ENCODE measurements at regions of chr2 and their contacts with region 1.

Region 1: GRCh38 chr2:152611458-152612231 is 105.6 kb downstream of the PRPF40A start:
- DNase-seq: peak; percentile 64
- ATAC-seq: peak; percentile 87
- H3K4me3 ChIP-seq: peak overlapping the region in 2 of 5 experiments; percentile 33 to 36
- H3K4me3 Mint-ChIP-seq: peak overlapping the region; percentile 59
- H3K27ac ChIP-seq: peak overlapping the region; percentile 12 to 66
- H3K27ac Mint-ChIP-seq: peak overlapping the region; percentile 28
- H3K4me1 ChIP-seq: peaks cover 19 to 24% of the 10 kb centered on the region in 2 donors
- H3K4me1 Mint-ChIP-seq: peaks cover 30% of the 10 kb centered on the region
- H3K27me3 ChIP-seq: no peaks in the 10 kb centered on the region
- H3K27me3 Mint-ChIP-seq: no peaks in the 10 kb centered on the region
- CTCF ChIP-seq: no peak

Region 2: GRCh38 chr2:152568531-152568930 is 43.1 kb before region 1 on chr2:
- CTCF ChIA-PET with region 1: no interaction called
- POLR2A ChIA-PET with region 1: interaction called, 10 read pairs
- intact Hi-C with region 1: no loop called
- DNase-seq: no peak
- ATAC-seq: no peak
- H3K4me3 ChIP-seq: no peak overlapping the region
- H3K4me3 Mint-ChIP-seq: no peak overlapping the region
- H3K27ac ChIP-seq: no peak overlapping the region
- H3K27ac Mint-ChIP-seq: no peak overlapping the region
- H3K4me1 ChIP-seq: peaks cover 5 to 12% of the 10 kb centered on the region in 2 donors
- H3K4me1 Mint-ChIP-seq: peaks cover 28% of the 10 kb centered on the region
- H3K27me3 ChIP-seq: no peaks in the 10 kb centered on the region
- H3K27me3 Mint-ChIP-seq: no peaks in the 10 kb centered on the region
- CTCF ChIP-seq: no peak

Region 3: GRCh38 chr2:152594022-152594766 is 17.5 kb before region 1 on chr2:
- CTCF ChIA-PET with region 1: no interaction called
- POLR2A ChIA-PET with region 1: no interaction called
- intact Hi-C with region 1: loop called (anchors 2 kb)
- DNase-seq: peak; percentile 61
- ATAC-seq: peak; percentile 88
- H3K4me3 ChIP-seq: no peak overlapping the region
- H3K4me3 Mint-ChIP-seq: no peak overlapping the region
- H3K27ac ChIP-seq: no peak overlapping the region
- H3K27ac Mint-ChIP-seq: peak overlapping the region; percentile 62
- H3K4me1 ChIP-seq: peaks cover 10 to 11% of the 10 kb centered on the region in 2 donors
- H3K4me1 Mint-ChIP-seq: peaks cover 20% of the 10 kb centered on the region
- H3K27me3 ChIP-seq: no peaks in the 10 kb centered on the region
- H3K27me3 Mint-ChIP-seq: no peaks in the 10 kb centered on the region
- CTCF ChIP-seq: no peak

Measured in B cell (primary cell).